ENCODE measurements at regions of chr11 and their contacts with region 1.

Region 1: DNA sequence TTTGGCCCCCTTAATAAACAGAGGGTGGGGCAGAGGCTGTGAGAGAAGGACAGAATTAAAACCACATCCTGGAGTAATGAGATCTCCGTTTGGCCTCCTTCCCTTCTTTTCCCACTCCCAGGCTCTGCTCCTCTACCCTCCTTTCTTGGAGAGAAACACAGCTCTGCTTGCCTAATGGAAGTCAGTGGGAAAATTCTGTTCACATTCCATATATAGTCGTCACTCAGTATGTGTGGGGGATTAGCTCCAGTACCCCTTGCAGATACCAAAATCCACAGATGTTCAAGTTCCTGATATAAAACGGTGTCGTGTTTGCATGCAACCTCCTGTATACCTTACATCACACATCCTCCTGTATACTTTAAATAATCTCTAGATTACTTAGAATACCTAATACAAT is 37.6 kb upstream of the THY1 start:
- DNase-seq: no peak
- ATAC-seq: peak; percentile 35; the same call in 1 of the 2 replicates
- H3K4me3 ChIP-seq: no peak overlapping the region
- H3K27ac ChIP-seq: no peak overlapping the region
- H3K4me1 ChIP-seq: peaks cover 3% of the 10 kb centered on the region; the same call in 1 of the 2 replicates
- H3K27me3 ChIP-seq: no peaks in the 10 kb centered on the region
- CTCF ChIP-seq: no peak

Region 2: DNA sequence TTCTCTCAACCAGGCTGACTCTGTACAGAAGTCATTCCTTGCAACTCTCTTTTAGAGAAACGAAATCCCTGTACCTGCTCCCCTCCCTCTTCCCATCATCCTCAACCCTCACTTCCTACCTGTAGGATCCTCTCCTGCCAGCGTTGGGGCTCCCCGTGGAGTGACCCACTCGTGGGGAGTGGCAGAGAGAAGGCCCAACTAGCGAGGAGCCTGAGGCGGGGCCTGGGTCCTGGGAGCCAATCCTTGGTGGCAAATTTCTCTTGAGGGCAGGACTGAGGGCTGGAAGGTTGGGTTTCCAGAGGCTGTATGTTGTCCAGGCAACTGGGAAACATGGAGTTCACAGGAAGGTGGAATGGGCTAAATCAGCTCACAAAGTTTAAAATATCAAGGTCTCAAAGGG is 264.9 kb before region 1 on chr11:
- CTCF ChIA-PET with region 1: no interaction called
- POLR2A ChIA-PET with region 1: no interaction called
- in situ Hi-C with region 1: no loop called
- intact Hi-C with region 1: no loop called
- DNase-seq: no peak
- ATAC-seq: peak; percentile 74
- H3K4me3 ChIP-seq: peak overlapping the region in 1 of 2 experiments; percentile 24; a peak in 1 of 4 replicates
- H3K27ac ChIP-seq: no peak overlapping the region
- H3K4me1 ChIP-seq: no peaks in the 10 kb centered on the region
- H3K27me3 ChIP-seq: no peaks in the 10 kb centered on the region
- CTCF ChIP-seq: no peak

Region 3: GRCh38 chr11:119295178-119295577 is 165.4 kb before region 1 on chr11:
- CTCF ChIA-PET with region 1: no interaction called
- POLR2A ChIA-PET with region 1: interaction called, 10 read pairs
- in situ Hi-C with region 1: no loop called
- intact Hi-C with region 1: no loop called
- DNase-seq: no peak
- ATAC-seq: peak; percentile 62; the same call in 1 of the 2 replicates
- H3K4me3 ChIP-seq: no peak overlapping the region
- H3K27ac ChIP-seq: no peak overlapping the region
- H3K4me1 ChIP-seq: no peaks in the 10 kb centered on the region
- H3K27me3 ChIP-seq: no peaks in the 10 kb centered on the region
- CTCF ChIP-seq: no peak; the same call in 1 of the 2 replicates

Region 4: GRCh38 chr11:119509282-119509841 is 48.8 kb after region 1 on chr11:
- CTCF ChIA-PET with region 1: no interaction called
- POLR2A ChIA-PET with region 1: no interaction called
- in situ Hi-C with region 1: no loop called
- intact Hi-C with region 1: no loop called
- DNase-seq: no peak
- ATAC-seq: no peak
- H3K4me3 ChIP-seq: no peak overlapping the region
- H3K27ac ChIP-seq: no peak overlapping the region
- H3K4me1 ChIP-seq: no peaks in the 10 kb centered on the region
- H3K27me3 ChIP-seq: no peaks in the 10 kb centered on the region
- CTCF ChIP-seq: no peak